ENCODE measurements at regions of chr5 and their contacts with region 1.

Region 1: DNA sequence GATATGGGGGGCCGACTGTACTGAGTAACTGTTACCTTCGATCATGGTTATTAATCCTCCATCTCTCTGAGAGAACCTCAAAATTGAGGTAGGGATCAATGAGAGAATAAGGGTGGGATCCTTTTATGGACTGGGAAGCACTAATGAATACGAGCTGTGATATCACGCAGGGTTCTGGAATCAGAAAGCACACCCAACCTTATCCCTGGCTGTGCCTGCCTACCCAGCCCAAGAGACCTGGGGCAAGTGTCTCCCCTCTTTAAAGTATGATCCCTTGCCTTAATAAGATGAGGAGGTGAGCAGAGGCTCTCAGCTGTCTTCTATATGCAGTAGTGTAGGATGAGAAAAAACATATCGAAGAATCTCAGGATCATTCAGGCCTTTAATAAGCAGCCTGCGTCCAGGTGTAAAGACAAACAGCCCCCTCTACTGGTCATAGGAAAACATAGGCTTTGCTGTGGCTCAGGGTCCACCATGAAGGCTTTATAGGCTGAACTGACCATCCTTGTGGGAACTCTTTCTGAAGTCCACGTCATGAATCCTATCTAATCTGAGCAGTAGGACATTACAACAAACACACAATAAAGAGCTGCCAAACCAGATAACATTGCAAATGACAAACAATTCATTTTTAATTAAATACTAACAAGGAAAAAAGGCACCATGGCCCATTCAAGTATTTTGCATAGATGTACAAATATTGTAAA is 16.8 kb downstream of the NIPAL4 start:
- DNase-seq: peak; percentile 48 to 72 (median 72)
- H3K4me3 ChIP-seq: no peak overlapping the region
- H3K27ac ChIP-seq: no peak overlapping the region
- H3K4me1 ChIP-seq: peaks cover 0 to 5% (median 0%) of the 10 kb centered on the region in 4 experiments
- H3K27me3 ChIP-seq: no peaks in the 10 kb centered on the region

Region 2: DNA sequence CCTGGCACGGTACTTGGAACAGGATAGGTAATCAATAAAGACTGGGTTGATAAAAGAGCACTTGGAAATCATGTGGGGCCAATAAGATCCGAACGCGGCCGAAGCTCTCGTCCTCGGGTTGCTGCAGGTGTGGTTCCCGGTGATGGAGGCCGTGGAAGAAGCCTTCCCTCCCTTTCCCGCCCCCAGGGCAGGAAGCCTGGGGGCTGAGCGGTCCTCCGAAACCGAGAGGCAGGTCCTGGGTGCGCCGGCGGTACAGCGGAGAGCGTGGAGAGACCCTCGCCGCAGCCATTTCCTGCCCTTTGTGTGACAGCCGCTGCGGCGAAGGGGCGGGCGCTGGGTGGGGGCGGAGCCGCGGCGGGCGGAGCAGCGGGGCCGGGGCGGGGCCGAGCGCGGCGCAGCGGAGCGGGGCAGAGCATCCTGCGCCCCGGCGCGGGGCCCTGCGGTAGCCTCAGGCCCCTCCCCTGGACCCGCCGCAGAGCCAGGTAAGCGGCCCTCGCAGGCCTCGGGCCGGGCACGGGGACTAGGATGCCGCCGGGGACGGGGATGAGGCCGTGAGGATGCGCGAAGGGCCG is 211.1 kb before region 1 on chr5 and contains the start of gene CYFIP2:
- CTCF ChIA-PET with region 1: no interaction called
- POLR2A ChIA-PET with region 1: no interaction called
- DNase-seq: peak; percentile 59 to 88 (median 85)
- H3K4me3 ChIP-seq: peak within 1 kb of the TSS; percentile 27 to 86 (median 75)
- H3K27ac ChIP-seq: peak within 1 kb of the TSS; percentile 56 to 78
- H3K4me1 ChIP-seq: peaks cover 27 to 74% (median 56%) of the 10 kb centered on the region in 4 experiments
- H3K27me3 ChIP-seq: no peaks in the 10 kb centered on the region

Region 3: GRCh38 chr5:157328277-157328912 is 148.5 kb before region 1 on chr5:
- CTCF ChIA-PET with region 1: interaction called, 11 read pairs
- POLR2A ChIA-PET with region 1: no interaction called
- DNase-seq: peak; percentile 80 to 85 (median 81)
- H3K4me3 ChIP-seq: peak overlapping the region in 1 of 7 experiments; percentile 21
- H3K27ac ChIP-seq: no peak overlapping the region
- H3K4me1 ChIP-seq: peaks cover 0 to 3% (median 0%) of the 10 kb centered on the region in 4 experiments
- H3K27me3 ChIP-seq: no peaks in the 10 kb centered on the region

Region 4: DNA sequence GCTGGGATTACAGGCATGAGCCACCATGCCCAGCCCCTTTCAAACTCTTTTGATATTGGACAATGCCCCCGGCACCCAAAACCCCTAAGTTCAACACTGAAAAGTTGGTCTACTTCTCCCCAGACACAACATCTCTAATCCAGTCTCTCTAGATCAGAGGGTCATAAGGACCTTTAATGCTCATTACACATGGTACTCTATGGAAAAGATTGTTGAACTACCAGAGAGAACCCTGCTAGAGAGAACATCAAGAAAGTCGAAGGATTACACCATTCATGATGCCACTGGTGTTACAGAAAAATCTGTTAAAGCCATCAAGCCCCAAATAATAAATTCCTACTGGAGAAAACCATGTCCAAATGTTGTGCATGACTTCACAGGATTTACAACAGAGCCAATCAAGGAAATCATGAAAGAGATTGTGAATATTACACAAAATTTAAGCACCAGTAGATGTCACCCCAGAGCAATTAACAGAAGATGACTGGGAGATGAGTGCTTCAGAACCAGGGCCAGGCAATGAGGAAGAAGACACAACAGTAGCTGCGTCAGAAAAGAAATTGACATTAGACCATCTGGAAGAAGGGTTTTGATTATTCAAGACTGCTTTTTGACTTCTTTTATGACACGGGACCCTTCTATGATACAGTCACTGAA is 45.2 kb before region 1 on chr5:
- CTCF ChIA-PET with region 1: interaction called, 12 read pairs
- POLR2A ChIA-PET with region 1: no interaction called
- DNase-seq: peak; percentile 65 to 84 (median 82)
- H3K4me3 ChIP-seq: no peak overlapping the region
- H3K27ac ChIP-seq: no peak overlapping the region
- H3K4me1 ChIP-seq: peaks cover 0 to 6% (median 2%) of the 10 kb centered on the region in 4 experiments
- H3K27me3 ChIP-seq: no peaks in the 10 kb centered on the region

Measured in common myeloid progenitor, CD34-positive (primary cell).